Posterior vena cava (tissue), 2 donors: ENCODE measurements at regions of chr10 and their contacts with region 1.

Region 1: DNA sequence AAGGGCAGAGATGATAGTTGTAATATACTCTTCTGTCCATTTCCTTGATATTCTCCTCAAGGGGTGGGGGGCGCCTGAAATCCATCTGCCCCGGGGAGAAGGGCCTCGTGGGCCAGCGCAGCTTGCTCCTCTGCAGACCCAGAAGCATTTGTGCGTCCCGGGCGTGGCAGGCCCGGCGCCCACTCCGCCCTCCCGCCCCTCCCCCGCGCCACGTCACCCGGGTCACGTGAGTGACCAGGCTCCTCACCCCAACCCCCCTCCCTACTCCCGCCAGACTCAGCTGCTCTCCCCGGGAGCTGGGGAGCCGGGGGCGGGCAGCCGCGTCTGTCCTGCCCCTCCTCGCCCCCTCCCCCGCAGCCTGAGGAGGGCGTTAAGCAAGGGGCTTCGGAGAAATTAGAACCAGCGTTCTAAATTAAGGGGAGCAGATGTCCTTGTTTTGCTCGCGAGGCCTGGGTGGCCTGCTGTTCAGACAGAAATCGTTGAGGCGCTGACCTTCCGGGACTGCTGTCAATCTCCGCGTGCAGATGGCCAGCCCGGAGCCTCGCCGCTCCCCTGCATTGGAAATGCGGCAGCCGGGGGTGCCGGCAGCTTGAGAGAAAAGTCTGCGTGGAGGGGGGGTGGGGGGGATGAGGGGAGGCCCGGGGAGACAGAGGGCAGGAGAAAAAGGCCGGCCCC is 102.1 kb upstream of the ZNF438 start:
- DNase-seq: peak; percentile 93

Region 2: GRCh38 chr10:31318854-31319601 is 185.3 kb after region 1 on chr10 and contains the start of gene ZEB1:
- intact Hi-C with region 1: loop called in 1 of 2 experiments (anchors 10 kb)
- DNase-seq: peak; percentile 92
- total RNA-seq, gene ZEB1: 118 to 141 TPM

Region 3: DNA sequence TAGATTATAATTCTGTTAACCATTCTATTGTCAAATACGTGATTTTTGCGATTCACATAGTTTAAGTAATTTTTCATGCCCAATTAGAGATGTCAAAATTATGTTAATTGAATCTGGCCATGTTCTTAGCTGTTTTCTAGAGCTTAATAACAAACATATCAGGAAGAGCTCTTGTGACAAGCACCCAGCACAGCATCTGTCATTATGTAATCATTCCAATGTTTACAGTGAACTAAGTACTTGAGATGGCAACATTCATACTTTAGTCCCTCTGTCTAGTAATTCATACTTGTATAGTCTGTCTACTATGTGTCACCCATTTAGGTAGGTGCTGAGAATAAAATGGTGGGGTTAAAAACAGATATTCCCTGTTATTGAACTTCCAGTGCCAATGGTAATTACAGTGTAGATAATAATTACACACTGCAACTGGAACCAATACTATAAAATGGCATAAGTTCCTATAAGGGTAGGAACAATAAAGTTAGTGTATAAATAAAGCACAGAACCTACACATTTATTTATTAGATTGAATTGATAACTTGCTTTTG is 240.5 kb after region 1 on chr10:
- intact Hi-C with region 1: no loop called
- DNase-seq: no peak